Activated CD4-positive, alpha-beta T cell treated with anti-CD3 and anti-CD28 coated beads, Interleukin-2, amount 10 ng/mL, durations not matched to agents 24 days and 14 days (primary cell): ENCODE measurements at regions of chr2 and their contacts with region 1.

Region 1: DNA sequence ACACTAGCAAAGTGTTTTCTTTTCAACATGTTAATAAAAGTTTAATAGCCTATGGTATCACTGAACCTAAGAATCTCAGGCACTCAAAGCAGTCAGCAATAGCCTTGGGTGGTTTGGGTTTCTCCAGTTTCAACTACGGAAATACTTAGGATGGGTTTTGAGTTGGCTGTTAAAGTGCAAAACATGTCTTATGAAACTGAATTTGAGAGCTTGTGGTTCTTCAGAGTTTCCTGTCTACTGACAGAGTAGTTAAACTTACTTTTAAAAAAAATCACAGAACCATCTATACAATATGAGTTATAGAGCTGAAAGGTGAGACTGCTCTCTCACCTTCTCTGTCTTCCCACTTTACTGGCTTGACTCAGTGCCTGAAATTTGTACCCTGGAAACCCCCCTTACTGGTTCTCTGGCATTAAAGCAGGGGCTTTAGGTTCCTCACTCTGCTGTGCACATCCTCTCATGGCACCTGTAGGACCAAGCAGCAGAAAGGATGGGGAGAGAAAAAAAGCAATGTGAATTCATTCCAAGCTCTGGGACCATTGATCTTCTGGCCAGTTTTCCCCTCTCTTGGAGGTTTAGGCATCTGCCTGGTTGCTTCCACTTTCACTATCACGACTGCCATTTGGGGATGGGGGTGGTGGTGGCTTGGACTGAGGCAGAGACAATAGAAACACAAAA is 18.1 kb downstream of the CCDC141 start:
- DNase-seq: peak; percentile 82
- H3K4me3 Mint-ChIP-seq: peak overlapping the region; percentile 85
- H3K27ac Mint-ChIP-seq: peak overlapping the region; percentile 97
- H3K4me1 Mint-ChIP-seq: peaks cover 24% of the 10 kb centered on the region
- H3K27me3 Mint-ChIP-seq: no peaks in the 10 kb centered on the region

Region 2: DNA sequence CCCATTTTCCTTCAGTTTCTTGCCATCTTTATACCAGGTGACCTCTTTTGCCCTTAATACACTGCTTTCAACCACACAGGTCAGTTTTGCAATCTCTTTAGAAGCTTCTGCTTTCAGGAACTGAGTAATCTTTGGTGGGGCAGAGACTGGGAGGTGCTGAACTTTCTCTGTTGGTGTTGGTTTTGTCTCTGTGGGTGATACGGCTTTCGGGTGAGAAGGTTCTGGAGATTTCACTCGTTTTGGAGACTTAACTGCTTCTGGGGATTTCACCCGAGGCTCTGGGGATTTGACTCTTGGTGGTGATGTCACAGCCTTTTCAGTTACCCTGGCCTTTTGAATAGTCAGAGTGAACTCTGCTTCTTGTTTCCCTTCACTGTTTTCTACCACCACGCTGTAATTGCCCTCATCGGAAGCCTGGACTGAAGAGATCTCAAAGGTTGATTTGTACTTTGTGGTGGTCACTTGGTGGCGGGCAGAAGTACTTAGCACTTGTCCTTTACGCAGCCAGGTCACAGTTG is 501.2 kb before region 1 on chr2:
- intact Hi-C with region 1: loop called (anchors 5 kb)
- DNase-seq: peak; percentile 79
- H3K4me3 Mint-ChIP-seq: peak overlapping the region; percentile 47
- H3K27ac Mint-ChIP-seq: peak overlapping the region; percentile 39
- H3K4me1 Mint-ChIP-seq: peaks cover 41% of the 10 kb centered on the region
- H3K27me3 Mint-ChIP-seq: no peaks in the 10 kb centered on the region

Region 3: GRCh38 chr2:178870703-178871102 is 161.2 kb before region 1 on chr2:
- intact Hi-C with region 1: loop called (anchors 5 kb)
- DNase-seq: peak; percentile 56
- H3K4me3 Mint-ChIP-seq: no peak overlapping the region
- H3K27ac Mint-ChIP-seq: no peak overlapping the region
- H3K4me1 Mint-ChIP-seq: peaks cover 21% of the 10 kb centered on the region
- H3K27me3 Mint-ChIP-seq: no peaks in the 10 kb centered on the region

Region 4: GRCh38 chr2:179049546-179050311 is 17.9 kb after region 1 on chr2 and contains the start of gene CCDC141:
- intact Hi-C with region 1: loop called (anchors 1 kb)
- DNase-seq: peak; percentile 76
- H3K4me3 Mint-ChIP-seq: peak within 1 kb of the TSS; percentile 87
- H3K27ac Mint-ChIP-seq: peak within 1 kb of the TSS; percentile 85
- H3K4me1 Mint-ChIP-seq: peaks cover 34% of the 10 kb centered on the region
- H3K27me3 Mint-ChIP-seq: no peaks in the 10 kb centered on the region
- total RNA-seq, gene CCDC141: 2.1 and 2.5 TPM in 2 replicates

Region 5: GRCh38 chr2:179264368-179265081 is 232.7 kb after region 1 on chr2 and contains the start of gene SESTD1:
- intact Hi-C with region 1: loop called (anchors 1 kb)
- DNase-seq: peak; percentile 91
- H3K4me3 Mint-ChIP-seq: peak within 1 kb of the TSS; percentile 91
- H3K27ac Mint-ChIP-seq: peak within 1 kb of the TSS; percentile 88
- H3K4me1 Mint-ChIP-seq: peaks cover 27% of the 10 kb centered on the region
- H3K27me3 Mint-ChIP-seq: peaks cover 49% of the 10 kb centered on the region
- total RNA-seq, gene SESTD1: 12.3 and 13.4 TPM in 2 replicates